Activated B cell treated with CpG ODN at 0.5 μM for 24 hours (primary cell): ENCODE measurements at regions of chr3 and their contacts with region 1.

Region 1: GRCh38 chr3:187679638-187680396 is 9.6 kb upstream of the SST start:
- DNase-seq: peak; percentile 50
- ATAC-seq: peak; percentile 70
- H3K4me3 Mint-ChIP-seq: no peak overlapping the region
- H3K27ac Mint-ChIP-seq: no peak overlapping the region
- H3K4me1 Mint-ChIP-seq: no peaks in the 10 kb centered on the region
- H3K27me3 Mint-ChIP-seq: peaks cover 37% of the 10 kb centered on the region
- CTCF ChIP-seq: peak; percentile 55

Region 2: DNA sequence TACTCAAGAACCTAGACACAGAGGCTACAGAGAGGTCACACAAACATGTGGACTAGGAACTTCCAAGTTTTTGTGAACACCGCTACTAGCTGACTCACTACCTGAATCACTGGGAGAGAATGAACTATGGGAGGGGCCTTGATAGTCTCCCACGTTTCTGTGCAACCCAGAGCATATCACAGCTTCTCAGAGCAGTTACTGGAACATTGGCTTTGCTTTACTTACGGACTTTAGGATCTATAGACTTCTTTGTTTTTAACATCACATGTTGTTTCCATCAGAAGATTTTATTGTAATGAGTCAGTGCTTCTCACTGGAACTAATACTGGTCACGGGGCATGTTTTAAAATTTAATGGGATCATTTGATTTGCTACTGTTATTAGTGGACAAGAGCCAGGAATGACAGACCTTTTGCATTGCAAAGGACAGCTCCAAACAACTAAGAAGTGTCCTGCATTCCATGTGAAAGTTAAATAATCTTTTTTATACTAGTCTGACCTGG is 276.0 kb before region 1 on chr3:
- CTCF ChIA-PET with region 1: no interaction called
- POLR2A ChIA-PET with region 1: no interaction called
- intact Hi-C with region 1: no loop called
- DNase-seq: no peak
- ATAC-seq: no peak
- H3K4me3 Mint-ChIP-seq: no peak overlapping the region
- H3K27ac Mint-ChIP-seq: no peak overlapping the region
- H3K4me1 Mint-ChIP-seq: no peaks in the 10 kb centered on the region
- H3K27me3 Mint-ChIP-seq: peaks cover 22% of the 10 kb centered on the region
- CTCF ChIP-seq: no peak

Region 3: GRCh38 chr3:187519428-187519890 is 160.4 kb before region 1 on chr3:
- CTCF ChIA-PET with region 1: no interaction called
- POLR2A ChIA-PET with region 1: no interaction called
- intact Hi-C with region 1: no loop called
- DNase-seq: no peak
- ATAC-seq: no peak
- H3K4me3 Mint-ChIP-seq: no peak overlapping the region
- H3K27ac Mint-ChIP-seq: no peak overlapping the region
- H3K4me1 Mint-ChIP-seq: peaks cover 7% of the 10 kb centered on the region
- H3K27me3 Mint-ChIP-seq: peaks cover 7% of the 10 kb centered on the region
- CTCF ChIP-seq: no peak

Region 4: DNA sequence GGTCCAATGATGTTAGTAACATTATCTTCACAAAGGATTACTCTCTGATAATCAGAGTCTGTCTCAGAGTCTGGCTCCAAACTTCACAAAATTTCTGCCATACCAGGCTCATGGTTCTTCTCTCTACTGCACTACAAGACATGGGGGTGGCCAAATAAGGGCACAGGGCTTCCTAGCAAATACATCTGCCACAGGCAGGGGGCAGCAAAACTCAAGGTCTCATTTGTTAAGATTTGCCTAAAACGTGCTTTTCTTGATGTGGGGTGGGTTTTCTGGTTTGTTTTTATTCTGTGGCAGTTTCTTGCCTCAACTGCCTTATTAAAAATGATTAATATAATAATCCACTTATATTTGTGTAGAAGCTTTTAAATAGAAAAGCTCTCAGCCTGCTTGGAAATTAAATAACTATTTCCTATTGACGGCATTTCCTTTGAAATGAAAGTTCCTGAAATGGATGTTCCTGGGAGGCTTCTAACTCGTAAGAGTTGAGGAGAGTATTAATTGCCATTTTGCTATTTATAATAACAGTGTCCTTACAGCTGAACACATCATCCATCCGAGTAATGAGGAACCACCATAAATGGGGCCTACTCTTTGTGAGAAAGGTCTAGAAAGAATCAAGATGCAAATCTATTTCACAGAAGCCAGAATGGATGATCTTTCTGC is 63.4 kb before region 1 on chr3:
- CTCF ChIA-PET with region 1: interaction called, 44 read pairs
- POLR2A ChIA-PET with region 1: no interaction called
- intact Hi-C with region 1: loop called (anchors 1 kb)
- DNase-seq: no peak
- ATAC-seq: peak; percentile 47
- H3K4me3 Mint-ChIP-seq: no peak overlapping the region
- H3K27ac Mint-ChIP-seq: no peak overlapping the region
- H3K4me1 Mint-ChIP-seq: no peaks in the 10 kb centered on the region
- H3K27me3 Mint-ChIP-seq: peaks cover 12% of the 10 kb centered on the region
- CTCF ChIP-seq: peak; percentile 26

Region 5: GRCh38 chr3:187642861-187643260 is 37.0 kb before region 1 on chr3:
- CTCF ChIA-PET with region 1: no interaction called
- POLR2A ChIA-PET with region 1: no interaction called
- intact Hi-C with region 1: no loop called
- DNase-seq: no peak
- ATAC-seq: no peak
- H3K4me3 Mint-ChIP-seq: no peak overlapping the region
- H3K27ac Mint-ChIP-seq: no peak overlapping the region
- H3K4me1 Mint-ChIP-seq: no peaks in the 10 kb centered on the region
- H3K27me3 Mint-ChIP-seq: peaks cover 17% of the 10 kb centered on the region
- CTCF ChIP-seq: no peak

Region 6: DNA sequence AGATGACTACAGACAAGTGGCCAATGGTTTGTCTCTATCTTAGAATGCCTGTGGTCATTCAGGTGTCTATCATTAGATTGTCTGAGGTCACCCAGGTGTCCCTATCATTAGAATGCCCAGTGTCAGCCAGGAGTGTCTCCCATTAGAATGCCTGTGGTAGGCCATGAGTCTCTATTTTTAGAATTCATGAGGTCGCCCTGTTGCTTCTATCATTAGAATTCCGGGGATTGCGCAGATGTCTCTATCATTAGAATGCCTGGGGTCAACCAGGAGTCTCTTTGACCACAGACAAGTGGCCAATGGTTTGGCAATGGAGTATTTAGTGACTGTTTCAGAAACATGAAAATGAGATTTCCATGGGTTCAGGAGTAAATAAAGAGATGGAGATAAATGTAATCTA is 15.0 kb after region 1 on chr3:
- CTCF ChIA-PET with region 1: interaction called, 15 read pairs
- POLR2A ChIA-PET with region 1: no interaction called
- intact Hi-C with region 1: no loop called
- DNase-seq: no peak
- ATAC-seq: no peak
- H3K4me3 Mint-ChIP-seq: no peak overlapping the region
- H3K27ac Mint-ChIP-seq: no peak overlapping the region
- H3K4me1 Mint-ChIP-seq: no peaks in the 10 kb centered on the region
- H3K27me3 Mint-ChIP-seq: peaks cover 27% of the 10 kb centered on the region
- CTCF ChIP-seq: no peak

Region 7: GRCh38 chr3:187714404-187714979 is 34.7 kb after region 1 on chr3:
- CTCF ChIA-PET with region 1: interaction called, 17 read pairs
- POLR2A ChIA-PET with region 1: no interaction called
- intact Hi-C with region 1: loop called (anchors 1 kb)
- DNase-seq: peak; percentile 32
- ATAC-seq: peak; percentile 98
- H3K4me3 Mint-ChIP-seq: no peak overlapping the region
- H3K27ac Mint-ChIP-seq: no peak overlapping the region
- H3K4me1 Mint-ChIP-seq: no peaks in the 10 kb centered on the region
- H3K27me3 Mint-ChIP-seq: no peaks in the 10 kb centered on the region
- CTCF ChIP-seq: no peak